ENCODE measurements at regions of chr5 and their contacts with region 1.

Region 1: DNA sequence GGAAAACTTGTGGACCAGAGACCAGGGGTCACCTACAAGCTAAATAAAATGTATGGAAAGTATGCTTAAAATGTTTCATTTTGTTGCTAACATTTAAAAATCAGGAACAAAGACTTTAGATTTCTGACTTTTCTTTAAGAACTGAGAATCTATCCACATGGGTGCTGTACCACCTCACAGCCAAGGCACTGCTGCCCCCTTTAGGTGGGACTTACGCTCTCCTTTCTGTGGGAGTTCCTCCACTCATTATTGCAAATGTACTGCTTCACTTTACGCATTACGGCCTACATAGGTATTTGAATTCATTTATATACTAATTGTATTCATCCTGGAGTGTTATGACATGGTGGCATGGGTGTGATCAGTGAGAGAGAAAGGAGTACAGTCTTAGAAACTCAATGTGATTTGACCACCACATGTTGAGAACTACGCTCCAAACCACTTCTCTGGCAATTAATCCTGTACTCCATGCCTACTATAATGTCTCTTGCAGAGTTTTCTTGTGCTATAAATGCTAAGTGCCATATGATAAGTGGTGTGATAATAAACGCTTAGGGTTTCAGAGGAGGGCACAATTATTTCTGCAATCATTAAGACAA is 24.7 kb upstream of the CETN3 start:
- DNase-seq: no peak
- H3K4me3 ChIP-seq: no peak overlapping the region
- CTCF ChIP-seq: peak; percentile 69

Region 2: DNA sequence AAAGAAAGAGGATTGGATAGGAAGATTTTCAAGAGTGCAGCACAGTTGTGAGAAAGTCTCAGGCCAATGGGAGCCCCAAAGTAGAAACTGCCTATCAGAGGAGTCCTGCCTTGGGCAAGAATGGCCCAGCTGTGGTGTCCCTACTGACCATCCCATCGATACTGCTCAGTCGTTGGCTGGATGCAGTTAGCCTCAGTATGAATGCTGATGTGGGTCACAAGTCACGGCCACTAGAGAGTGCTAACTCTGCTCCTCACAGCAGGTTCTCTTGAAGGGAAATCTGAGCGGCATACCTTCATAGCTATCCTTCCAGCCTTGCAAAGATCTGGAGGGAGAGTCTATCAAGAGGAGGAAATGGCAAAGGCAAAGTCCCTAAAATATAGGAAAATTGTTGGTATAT is 13.1 kb before region 1 on chr5:
- CTCF ChIA-PET with region 1: interaction called, 14 read pairs
- POLR2A ChIA-PET with region 1: no interaction called
- DNase-seq: no peak
- H3K4me3 ChIP-seq: no peak overlapping the region
- CTCF ChIP-seq: peak; percentile 12

Region 3: GRCh38 chr5:90529194-90529938 is 95.2 kb after region 1 on chr5 and contains the start of gene LYSMD3:
- CTCF ChIA-PET with region 1: interaction called, 112 read pairs
- POLR2A ChIA-PET with region 1: no interaction called
- DNase-seq: peak; percentile 69
- H3K4me3 ChIP-seq: peak within 1 kb of the TSS; percentile 96
- CTCF ChIP-seq: no peak

Region 4: DNA sequence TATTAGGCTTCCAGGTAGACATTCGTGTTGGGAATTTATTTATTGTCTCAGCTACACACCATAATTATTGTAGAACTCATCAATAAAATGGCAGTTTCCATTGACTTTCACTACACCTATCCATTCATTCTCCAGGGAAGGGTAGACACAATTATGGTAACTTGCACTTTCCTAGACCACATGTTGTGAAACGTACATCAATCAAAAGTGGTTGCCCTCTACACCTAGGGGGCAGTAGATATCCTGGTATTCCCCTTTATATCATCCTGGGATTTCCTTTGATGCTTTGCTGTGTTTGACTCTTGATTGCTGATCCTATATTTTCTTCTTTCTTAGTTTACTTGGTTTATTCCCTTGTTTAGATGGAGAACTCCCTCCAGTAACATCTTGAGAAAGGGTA is 172.3 kb after region 1 on chr5:
- CTCF ChIA-PET with region 1: interaction called, 45 read pairs
- POLR2A ChIA-PET with region 1: no interaction called
- DNase-seq: no peak
- H3K4me3 ChIP-seq: no peak overlapping the region
- CTCF ChIP-seq: no peak

Region 5: DNA sequence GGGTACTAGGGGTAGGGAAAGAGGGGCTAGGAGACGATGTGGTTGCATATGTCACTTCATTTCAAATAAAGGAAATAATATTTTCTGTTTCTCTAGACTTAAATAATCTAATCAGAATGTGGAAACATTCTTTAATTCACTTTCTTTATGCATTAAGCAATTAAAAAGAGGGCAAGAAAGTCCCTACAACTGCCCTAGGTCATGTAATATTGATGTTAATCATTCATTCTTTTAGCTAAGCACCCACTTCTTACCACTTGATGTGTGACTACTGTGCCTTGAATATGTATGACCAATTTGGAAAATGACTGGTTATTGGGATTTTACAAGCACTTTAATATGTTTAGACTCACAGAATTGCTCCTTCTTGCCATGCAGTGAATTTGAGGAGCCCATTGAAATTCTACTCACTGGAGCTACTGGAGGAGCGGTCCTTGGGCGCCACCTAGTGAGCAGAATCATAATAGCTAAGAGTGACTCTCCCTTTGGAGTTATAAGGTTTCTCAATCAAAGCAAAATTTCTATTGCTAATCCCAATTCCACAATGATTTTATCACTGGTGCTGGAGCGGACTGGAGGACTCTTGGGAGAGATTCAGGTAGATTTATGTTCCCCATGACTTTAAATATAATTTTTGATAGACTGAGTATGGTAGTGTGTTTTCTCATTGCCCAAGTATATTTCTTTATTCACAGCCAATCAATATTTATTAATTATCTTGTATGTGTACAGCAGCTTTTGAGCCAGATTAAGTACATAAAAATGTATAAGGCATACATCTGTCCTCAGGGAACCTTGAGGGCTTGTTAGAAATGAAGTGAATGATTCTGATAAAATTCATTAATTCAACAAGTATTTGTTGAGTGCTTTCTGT is 349.5 kb after region 1 on chr5:
- CTCF ChIA-PET with region 1: interaction called, 10 read pairs
- POLR2A ChIA-PET with region 1: no interaction called
- DNase-seq: peak; percentile 16
- H3K4me3 ChIP-seq: no peak overlapping the region
- CTCF ChIP-seq: peak; percentile 83